ENCODE measurements at regions of chr6 and their contacts with region 1.

Region 1: GRCh38 chr6:154974485-154975149 is 20.5 kb upstream of the TIAM2 start:
- DNase-seq: peak in 1 of 2 experiments; percentile 79
- H3K4me3 ChIP-seq: no peak overlapping the region
- H3K27ac ChIP-seq: no peak overlapping the region
- H3K4me1 ChIP-seq: no peaks in the 10 kb centered on the region
- H3K27me3 ChIP-seq: no peaks in the 10 kb centered on the region
- CTCF ChIP-seq: peak; percentile 45 to 61 (median 57)
- EP300 ChIP-seq: no peak
- POLR2A ChIP-seq: no peak
- RAD21 ChIP-seq: peak; percentile 43 to 60

Region 2: GRCh38 chr6:154962753-154963152 is 11.9 kb before region 1 on chr6:
- CTCF ChIA-PET with region 1: interaction called, 86 read pairs
- POLR2A ChIA-PET with region 1: interaction called, 3 read pairs
- DNase-seq: no peak
- H3K4me3 ChIP-seq: no peak overlapping the region
- H3K27ac ChIP-seq: no peak overlapping the region
- H3K4me1 ChIP-seq: peaks cover 0 to 2% (median 0%) of the 10 kb centered on the region in 4 experiments; a peak in 1 of 7 replicates
- H3K27me3 ChIP-seq: no peaks in the 10 kb centered on the region
- CTCF ChIP-seq: no peak
- EP300 ChIP-seq: no peak
- POLR2A ChIP-seq: no peak
- RAD21 ChIP-seq: no peak

Region 3: GRCh38 chr6:154986787-154987235 is 12.2 kb after region 1 on chr6:
- CTCF ChIA-PET with region 1: interaction called, 12 read pairs
- POLR2A ChIA-PET with region 1: no interaction called
- DNase-seq: no peak
- H3K4me3 ChIP-seq: no peak overlapping the region
- H3K27ac ChIP-seq: no peak overlapping the region
- H3K4me1 ChIP-seq: no peaks in the 10 kb centered on the region; a peak in 3 of 7 replicates
- H3K27me3 ChIP-seq: no peaks in the 10 kb centered on the region
- CTCF ChIP-seq: no peak
- EP300 ChIP-seq: no peak
- POLR2A ChIP-seq: no peak
- RAD21 ChIP-seq: no peak